T-cell (primary cell): ENCODE measurements at regions of chr14 and their contacts with region 1.

Region 1: GRCh38 chr14:76576047-76576741 is 185.1 kb upstream of the VASH1 start:
- DNase-seq: no peak
- ATAC-seq: no peak
- H3K4me3 ChIP-seq: no peak overlapping the region
- H3K4me3 Mint-ChIP-seq: no peak overlapping the region
- H3K27ac ChIP-seq: no peak overlapping the region
- H3K27ac Mint-ChIP-seq: no peak overlapping the region
- H3K4me1 ChIP-seq: no peaks in the 10 kb centered on the region
- H3K4me1 Mint-ChIP-seq: no peaks in the 10 kb centered on the region
- H3K27me3 ChIP-seq: peaks cover 0 to 13% of the 10 kb centered on the region in 2 experiments
- H3K27me3 Mint-ChIP-seq: peaks cover 3 to 30% of the 10 kb centered on the region in 2 donors

Region 2: DNA sequence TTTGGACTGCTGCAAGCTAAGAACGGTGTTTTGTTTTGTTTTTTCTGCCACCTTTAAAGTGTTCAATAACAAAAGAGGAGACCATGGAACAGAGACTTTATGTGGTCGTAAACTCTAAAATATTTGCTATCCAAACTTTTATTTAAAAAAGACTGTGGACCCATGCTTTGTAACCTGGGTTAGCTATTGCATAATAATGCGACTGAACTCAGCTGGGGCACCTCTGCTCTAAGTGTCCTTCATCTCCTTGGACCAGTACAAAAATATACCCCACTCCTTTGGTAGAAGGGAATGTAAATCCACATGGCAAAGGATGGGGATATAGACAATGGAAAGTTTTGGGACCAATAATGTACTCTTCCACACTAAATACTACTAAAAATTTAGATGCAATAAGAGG is 359.0 kb before region 1 on chr14:
- CTCF ChIA-PET with region 1: no interaction called
- POLR2A ChIA-PET with region 1: interaction called in 1 of 2 experiments, 17 read pairs
- DNase-seq: no peak
- ATAC-seq: no peak
- H3K4me3 ChIP-seq: no peak overlapping the region
- H3K4me3 Mint-ChIP-seq: no peak overlapping the region
- H3K27ac ChIP-seq: no peak overlapping the region
- H3K27ac Mint-ChIP-seq: no peak overlapping the region
- H3K4me1 ChIP-seq: no peaks in the 10 kb centered on the region
- H3K4me1 Mint-ChIP-seq: no peaks in the 10 kb centered on the region
- H3K27me3 ChIP-seq: no peaks in the 10 kb centered on the region
- H3K27me3 Mint-ChIP-seq: no peaks in the 10 kb centered on the region